A549 (cell line): ENCODE measurements at regions of chr3 and their contacts with region 1.

Region 1: DNA sequence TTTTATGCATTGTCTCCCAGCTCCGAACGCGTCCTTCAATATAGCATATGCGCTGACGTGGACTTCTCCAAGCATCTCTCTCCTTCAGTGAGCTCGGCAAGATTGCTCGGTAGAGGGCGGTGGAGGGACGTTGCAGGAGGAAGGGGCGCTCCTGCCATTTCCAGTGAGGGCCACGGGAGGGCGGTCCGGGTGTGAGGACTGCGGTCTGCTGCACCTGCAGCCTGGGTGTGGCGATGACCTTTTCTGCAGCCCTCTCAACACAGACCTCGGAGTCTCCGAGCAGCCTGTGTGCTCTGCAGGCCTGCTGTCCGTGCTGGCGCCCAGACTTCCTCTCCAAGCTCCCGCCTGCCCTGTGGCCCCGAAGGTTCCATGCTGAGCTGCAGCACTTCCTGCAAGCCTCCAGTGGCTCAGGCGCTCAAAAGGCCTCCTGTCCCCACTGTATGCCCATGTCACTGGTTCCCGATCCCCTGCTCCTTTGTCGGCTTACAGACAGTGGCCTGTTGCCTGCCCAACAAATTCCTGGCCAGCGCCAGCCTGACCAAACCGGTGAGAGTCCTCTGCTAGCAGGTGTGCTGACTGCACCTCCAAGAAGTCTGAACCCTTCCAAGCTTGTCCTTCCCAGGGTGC is 8.9 kb upstream of the RTP3 start:
- DNase-seq: peak; percentile 84 to 86
- ATAC-seq: peak; percentile 97 to 99
- H3K4me3 ChIP-seq: no peak overlapping the region
- H3K27ac ChIP-seq: no peak overlapping the region
- H3K4me1 ChIP-seq: no peaks in the 10 kb centered on the region
- CTCF ChIP-seq: peak; percentile 90
- EP300 ChIP-seq: no peak
- POLR2A ChIP-seq: no peak
- RAD21 ChIP-seq: peak; percentile 91 to 94

Region 2: DNA sequence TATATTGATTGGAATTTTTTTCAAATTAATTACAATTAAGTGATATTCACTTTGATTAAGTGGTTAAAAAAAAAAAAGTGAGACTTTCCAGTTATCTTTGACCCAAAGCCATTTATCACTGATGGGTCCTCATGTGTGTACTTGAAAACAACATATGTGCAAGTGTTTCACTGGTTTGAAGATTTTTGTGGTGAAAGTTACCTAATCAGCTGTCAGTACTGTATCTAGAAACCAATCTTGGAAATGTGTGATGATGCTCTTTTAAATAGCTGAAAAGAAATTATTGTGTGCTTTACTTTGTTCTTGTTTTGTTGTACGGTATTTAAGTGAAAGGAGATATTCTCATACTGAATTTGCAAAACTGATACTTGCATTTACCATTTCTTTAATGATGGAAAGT is 449.9 kb before region 1 on chr3:
- CTCF ChIA-PET with region 1: no interaction called
- POLR2A ChIA-PET with region 1: no interaction called
- DNase-seq: no peak
- ATAC-seq: no peak
- H3K4me3 ChIP-seq: no peak overlapping the region
- H3K27ac ChIP-seq: no peak overlapping the region
- H3K4me1 ChIP-seq: no peaks in the 10 kb centered on the region
- CTCF ChIP-seq: no peak
- EP300 ChIP-seq: no peak
- POLR2A ChIP-seq: no peak
- RAD21 ChIP-seq: no peak

Region 3: GRCh38 chr3:46442576-46443562 is 46.0 kb before region 1 on chr3:
- CTCF ChIA-PET with region 1: no interaction called
- POLR2A ChIA-PET with region 1: no interaction called
- DNase-seq: peak; percentile 28 to 51
- ATAC-seq: peak; percentile 74 to 81; a peak in 5 of 6 replicates
- H3K4me3 ChIP-seq: no peak overlapping the region
- H3K27ac ChIP-seq: no peak overlapping the region
- H3K4me1 ChIP-seq: no peaks in the 10 kb centered on the region
- CTCF ChIP-seq: peak; percentile 63
- EP300 ChIP-seq: no peak
- POLR2A ChIP-seq: no peak
- RAD21 ChIP-seq: peak; percentile 44 to 52; a peak in 4 of 5 replicates

Region 4: DNA sequence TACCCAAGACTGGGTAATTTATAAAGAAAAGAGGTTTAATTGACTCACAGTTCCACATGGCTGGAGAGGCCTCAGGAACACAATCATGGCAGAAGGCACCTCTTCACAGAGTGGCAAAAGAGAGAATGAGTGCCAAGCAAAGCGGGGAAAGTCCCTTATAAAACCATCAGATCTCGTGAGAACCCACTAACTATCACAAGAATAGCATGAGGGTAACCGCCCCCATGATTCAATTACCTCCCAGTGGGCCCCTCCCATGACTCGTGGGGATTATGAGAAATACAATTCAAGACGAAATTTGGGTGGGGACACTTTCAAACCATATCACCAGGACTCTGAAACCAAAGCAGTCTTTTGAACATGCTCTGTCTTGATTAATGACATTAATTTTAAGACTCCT is 15.9 kb after region 1 on chr3:
- CTCF ChIA-PET with region 1: interaction called, 28 read pairs
- POLR2A ChIA-PET with region 1: no interaction called
- DNase-seq: no peak
- ATAC-seq: no peak
- H3K4me3 ChIP-seq: no peak overlapping the region
- H3K27ac ChIP-seq: no peak overlapping the region
- H3K4me1 ChIP-seq: no peaks in the 10 kb centered on the region
- CTCF ChIP-seq: no peak
- EP300 ChIP-seq: no peak
- POLR2A ChIP-seq: no peak
- RAD21 ChIP-seq: no peak

Region 5: DNA sequence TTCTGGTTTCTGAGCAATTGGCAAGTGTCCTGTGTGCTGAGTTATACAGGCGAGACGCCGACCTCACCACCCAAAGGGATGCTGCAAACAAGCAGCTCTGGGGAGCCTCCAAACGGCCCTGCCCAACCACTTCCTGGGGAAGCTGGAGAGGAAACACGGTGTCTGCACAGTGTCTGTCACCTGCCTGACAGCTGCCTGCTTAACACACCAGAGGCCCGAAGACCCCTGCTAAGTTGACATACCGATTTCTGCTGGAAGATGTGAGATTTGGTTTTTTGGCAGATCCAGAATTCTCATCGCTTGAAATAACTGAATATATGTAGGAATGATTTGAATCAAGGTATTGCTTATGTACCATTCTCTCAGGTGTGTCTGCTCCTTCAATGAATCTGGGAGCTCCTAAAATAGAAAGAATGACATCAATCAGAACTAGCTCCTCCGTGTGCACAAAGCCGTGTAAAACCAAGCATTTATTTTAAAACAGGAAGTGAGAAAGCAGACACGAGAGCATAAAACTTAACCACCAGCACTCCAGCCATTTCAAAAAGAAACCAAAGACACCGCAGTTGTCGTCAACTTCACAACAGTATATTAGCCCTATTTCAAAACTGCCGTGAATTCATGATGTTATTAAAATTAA is 50.1 kb after region 1 on chr3:
- CTCF ChIA-PET with region 1: interaction called, 20 read pairs
- POLR2A ChIA-PET with region 1: no interaction called
- DNase-seq: no peak
- ATAC-seq: no peak
- H3K4me3 ChIP-seq: no peak overlapping the region
- H3K27ac ChIP-seq: no peak overlapping the region
- H3K4me1 ChIP-seq: peaks cover 6% of the 10 kb centered on the region; the same call in 1 of the 3 replicates
- CTCF ChIP-seq: no peak
- EP300 ChIP-seq: no peak
- POLR2A ChIP-seq: no peak
- RAD21 ChIP-seq: no peak

Region 6: GRCh38 chr3:46558184-46559043 is 69.6 kb after region 1 on chr3:
- CTCF ChIA-PET with region 1: interaction called, 100 read pairs
- POLR2A ChIA-PET with region 1: no interaction called
- DNase-seq: peak; percentile 80 to 89
- ATAC-seq: peak; percentile 99 to 100
- H3K4me3 ChIP-seq: peak overlapping the region; percentile 60
- H3K27ac ChIP-seq: peak overlapping the region; percentile 70 to 80
- H3K4me1 ChIP-seq: peaks cover 3% of the 10 kb centered on the region; the same call in 1 of the 3 replicates
- CTCF ChIP-seq: peak; percentile 72
- EP300 ChIP-seq: no peak
- POLR2A ChIP-seq: peak; percentile 45
- RAD21 ChIP-seq: peak; percentile 79 to 86

Region 7: GRCh38 chr3:46629551-46630517 is 141.0 kb after region 1 on chr3:
- CTCF ChIA-PET with region 1: interaction called, 90 read pairs
- POLR2A ChIA-PET with region 1: interaction called, 3 read pairs
- DNase-seq: peak; percentile 48 to 70
- ATAC-seq: peak; percentile 94 to 100
- H3K4me3 ChIP-seq: no peak overlapping the region
- H3K27ac ChIP-seq: peak overlapping the region in 1 of 2 experiments; percentile 66; a peak in 4 of 6 replicates
- H3K4me1 ChIP-seq: 0 out of 3 replicates have a peak, but pooled peaks cover 3% of the 10 kb centered on the region
- CTCF ChIP-seq: peak; percentile 82
- EP300 ChIP-seq: no peak
- POLR2A ChIP-seq: no peak
- RAD21 ChIP-seq: peak; percentile 46 to 59